Stomach (tissue), 19 donors: ENCODE measurements at regions of chr16 and their contacts with region 1.

Region 1: DNA sequence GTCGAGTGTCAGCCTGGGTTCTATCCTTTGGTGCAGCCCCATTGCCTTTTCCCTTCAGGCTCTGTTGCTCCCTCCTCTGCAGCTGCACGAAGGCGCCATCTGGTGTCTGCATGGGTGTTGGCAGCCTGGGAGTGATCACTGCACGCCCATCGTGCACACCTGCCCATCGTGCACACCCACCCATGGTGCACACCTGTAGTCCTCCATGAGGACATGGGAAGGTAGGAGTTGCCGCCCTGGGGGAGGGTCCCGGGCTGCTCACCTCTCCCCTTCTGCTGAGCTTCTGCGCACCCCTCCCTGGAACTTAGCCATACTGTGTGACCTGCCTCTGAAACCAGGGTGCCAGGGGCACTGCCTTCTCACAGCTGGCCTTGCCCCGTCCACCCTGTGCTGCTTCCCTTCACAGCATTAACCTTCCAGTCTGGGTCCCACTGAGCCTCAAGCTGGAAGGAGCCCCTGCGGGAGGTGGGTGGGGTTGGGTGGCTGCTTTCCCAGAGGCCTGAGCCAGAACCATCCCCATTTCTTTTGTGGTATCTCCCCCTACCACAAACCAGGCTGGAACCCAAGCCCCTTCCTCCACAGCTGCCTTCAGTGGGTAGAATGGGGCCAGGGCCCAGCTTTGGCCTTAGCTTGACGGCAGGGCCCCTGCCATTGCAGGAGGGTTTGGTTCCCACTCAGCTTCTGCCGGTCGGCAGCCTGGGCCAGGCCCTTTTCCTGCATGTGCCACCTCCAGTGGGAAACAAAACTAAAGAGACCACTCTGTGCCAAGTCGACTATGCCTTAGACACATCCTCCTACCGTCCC is 2.9 kb downstream of the CTRL start:
- DNase-seq: peak; percentile 76 to 88
- H3K4me3 ChIP-seq: no peak overlapping the region
- H3K27ac ChIP-seq: no peak overlapping the region
- H3K4me1 ChIP-seq: peaks cover 12 to 24% (median 14%) of the 10 kb centered on the region in 4 donors
- H3K27me3 ChIP-seq: no peaks in the 10 kb centered on the region
- CTCF ChIP-seq: peak in 5 of 7 experiments; percentile 71 to 90 (median 80)
- EP300 ChIP-seq: no peak
- POLR2A ChIP-seq: no peak

Region 2: DNA sequence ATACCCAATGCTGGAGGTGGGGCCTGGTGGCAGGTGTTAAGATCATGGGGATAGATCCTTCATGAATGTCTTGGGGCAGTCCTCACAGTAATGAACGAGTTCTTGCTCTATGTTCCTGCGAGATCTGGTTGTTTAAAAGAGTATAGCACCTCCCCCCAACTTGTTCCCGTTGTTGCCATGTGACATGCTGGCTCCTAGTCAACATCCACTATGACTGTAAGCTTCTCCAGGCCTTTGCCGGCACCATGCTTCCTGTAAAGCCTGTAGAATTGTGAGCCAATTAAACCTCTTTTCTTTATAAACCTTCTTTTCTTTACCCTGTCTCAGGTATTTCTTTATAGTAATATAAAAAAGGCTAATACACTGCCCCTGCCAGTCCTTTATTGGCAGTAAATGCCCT is 155.7 kb before region 1 on chr16:
- intact Hi-C with region 1: no loop called
- DNase-seq: peak in 1 of 2 donors; percentile 55
- H3K4me3 ChIP-seq: no peak overlapping the region
- H3K27ac ChIP-seq: peak overlapping the region in 3 of 5 donors; percentile 33 to 71 (median 46)
- H3K4me1 ChIP-seq: peaks cover 15 to 22% (median 18%) of the 10 kb centered on the region in 4 donors
- H3K27me3 ChIP-seq: no peaks in the 10 kb centered on the region
- CTCF ChIP-seq: no peak
- EP300 ChIP-seq: no peak
- POLR2A ChIP-seq: no peak

Region 3: DNA sequence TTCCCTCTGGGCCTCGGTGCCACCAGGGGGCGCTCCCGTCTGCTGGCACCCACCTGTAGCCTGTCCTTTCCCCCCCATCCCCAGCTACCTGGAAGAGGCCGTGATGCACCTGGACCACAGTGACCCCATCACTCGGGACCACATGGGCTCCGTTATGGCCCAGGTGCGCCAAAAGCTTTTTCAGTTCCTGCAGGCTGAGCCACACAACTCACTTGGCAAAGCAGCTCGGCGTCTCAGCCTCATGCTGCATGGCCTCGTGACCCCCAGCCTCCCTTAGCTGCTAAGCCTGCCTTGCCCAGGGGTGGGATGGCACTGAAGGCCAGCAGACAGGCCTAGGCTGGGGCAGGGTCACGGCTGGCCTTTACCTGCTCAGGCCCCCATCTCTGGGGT is 44.9 kb before region 1 on chr16:
- intact Hi-C with region 1: loop called (anchors 5 kb)
- DNase-seq: peak; percentile 76 to 83
- H3K4me3 ChIP-seq: no peak overlapping the region
- H3K27ac ChIP-seq: peak overlapping the region in 3 of 5 donors; percentile 33 to 80 (median 47)
- H3K4me1 ChIP-seq: peaks cover 12 to 27% (median 15%) of the 10 kb centered on the region in 4 donors
- H3K27me3 ChIP-seq: no peaks in the 10 kb centered on the region
- CTCF ChIP-seq: peak in 5 of 7 experiments; percentile 59 to 91 (median 81)
- EP300 ChIP-seq: no peak
- POLR2A ChIP-seq: no peak